Heart right ventricle (tissue), 16 donors: ENCODE measurements at regions of chr3 and their contacts with region 1.

Region 1: DNA sequence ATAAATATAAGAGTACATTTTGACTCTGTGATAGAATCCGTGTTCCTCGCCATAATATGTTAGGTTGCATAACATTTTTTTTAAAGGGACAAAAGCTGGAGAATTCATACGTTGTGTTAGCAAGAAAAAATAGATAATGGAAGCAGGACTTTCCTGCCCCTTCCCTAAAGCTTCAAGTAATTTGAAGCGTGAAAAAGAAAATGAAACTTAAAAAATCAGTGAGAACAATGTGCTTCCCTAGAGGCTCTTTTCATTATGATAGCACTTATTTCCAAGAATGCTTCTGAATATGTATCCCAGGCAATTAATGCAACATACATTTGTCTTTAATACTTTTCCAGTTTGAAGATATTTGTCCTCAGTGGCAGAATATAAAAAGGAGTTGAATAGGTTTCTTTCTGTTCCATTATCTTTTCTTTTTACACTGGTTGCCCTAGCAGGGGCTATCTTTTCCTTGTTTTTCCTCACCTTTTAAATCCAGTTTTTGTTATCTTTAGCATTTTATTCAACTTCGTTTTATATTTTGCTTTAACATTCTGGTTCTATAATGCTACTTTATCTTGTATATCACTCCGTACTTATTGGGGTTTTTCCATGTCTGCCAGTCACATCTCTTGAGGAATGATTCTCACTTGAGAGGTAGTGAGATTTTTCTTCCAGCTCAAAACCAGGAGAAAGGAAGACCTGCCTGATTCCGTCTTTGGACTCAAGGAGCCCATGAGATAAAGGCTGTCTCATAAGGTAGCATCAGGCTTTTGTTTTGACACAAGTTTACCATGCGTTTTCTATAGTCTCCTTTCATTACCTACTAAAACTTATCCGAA is 113.8 kb downstream of the MBNL1 start:
- DNase-seq: no peak
- ATAC-seq: peak in 7 of 8 donors; percentile 15 to 51 (median 32)
- H3K4me3 ChIP-seq: peak overlapping the region in 9 of 10 donors; percentile 3 to 51 (median 39)
- H3K27ac ChIP-seq: peak overlapping the region; percentile 1 to 86 (median 73)
- H3K4me1 ChIP-seq: peaks cover 5 to 99% (median 89%) of the 10 kb centered on the region in 9 donors
- H3K27me3 ChIP-seq: no peaks in the 10 kb centered on the region
- CTCF ChIP-seq: no peak

Region 2: GRCh38 chr3:152322756-152323155 is 59.8 kb before region 1 on chr3:
- intact Hi-C with region 1: loop called in 1 of 10 experiments (anchors 5 kb)
- DNase-seq: no peak
- ATAC-seq: peak in 4 of 8 donors; percentile 28 to 53 (median 42)
- H3K4me3 ChIP-seq: no peak overlapping the region
- H3K27ac ChIP-seq: peak overlapping the region in 8 of 10 donors; percentile 6 to 67 (median 54)
- H3K4me1 ChIP-seq: peaks cover 3 to 91% (median 74%) of the 10 kb centered on the region in 9 donors
- H3K27me3 ChIP-seq: no peaks in the 10 kb centered on the region
- CTCF ChIP-seq: no peak

Region 3: GRCh38 chr3:152331018-152331541 is 51.4 kb before region 1 on chr3:
- intact Hi-C with region 1: loop called in 1 of 10 experiments (anchors 5 kb)
- DNase-seq: peak in 1 of 2 donors; percentile 62
- ATAC-seq: peak; percentile 62 to 87 (median 81)
- H3K4me3 ChIP-seq: no peak overlapping the region
- H3K27ac ChIP-seq: peak overlapping the region in 9 of 10 donors; percentile 52 to 77 (median 66)
- H3K4me1 ChIP-seq: peaks cover 15 to 95% (median 81%) of the 10 kb centered on the region in 9 donors
- H3K27me3 ChIP-seq: no peaks in the 10 kb centered on the region
- CTCF ChIP-seq: no peak

Region 4: GRCh38 chr3:152436707-152437590 is 54.4 kb after region 1 on chr3:
- intact Hi-C with region 1: loop called in 1 of 10 experiments (anchors 10 kb)
- DNase-seq: no peak
- ATAC-seq: peak; percentile 41 to 76 (median 62)
- H3K4me3 ChIP-seq: no peak overlapping the region
- H3K27ac ChIP-seq: peak overlapping the region in 8 of 10 donors; percentile 9 to 54 (median 35)
- H3K4me1 ChIP-seq: peaks cover 0 to 53% (median 45%) of the 10 kb centered on the region in 9 donors
- H3K27me3 ChIP-seq: no peaks in the 10 kb centered on the region
- CTCF ChIP-seq: no peak

Region 5: DNA sequence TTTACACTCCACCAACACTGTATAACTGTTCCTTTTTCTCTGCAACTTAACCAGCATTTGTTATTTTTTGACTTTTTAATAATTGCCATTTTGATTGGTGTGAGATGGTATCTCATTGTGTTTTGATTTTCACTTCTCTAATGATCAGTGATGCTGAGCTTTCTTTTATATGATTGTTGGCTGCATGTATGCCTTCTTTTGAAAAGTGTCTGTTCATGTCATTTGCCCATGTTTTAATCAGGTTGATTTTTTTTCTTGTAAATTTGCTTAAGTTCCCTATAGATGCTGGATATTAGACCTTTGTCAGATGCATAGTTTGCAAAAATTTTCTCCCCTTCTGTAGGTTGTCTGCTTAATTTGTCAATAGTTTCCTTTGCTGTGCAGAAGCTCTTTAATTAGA is 149.2 kb after region 1 on chr3:
- intact Hi-C with region 1: no loop called
- DNase-seq: no peak
- ATAC-seq: no peak
- H3K4me3 ChIP-seq: no peak overlapping the region
- H3K27ac ChIP-seq: no peak overlapping the region
- H3K4me1 ChIP-seq: no peaks in the 10 kb centered on the region
- H3K27me3 ChIP-seq: no peaks in the 10 kb centered on the region
- CTCF ChIP-seq: no peak